ENCODE measurements at regions of chr5 and their contacts with region 1.

Region 1: GRCh38 chr5:95835682-95836385 is 13.3 kb upstream of the GLRX start:
- DNase-seq: peak; percentile 35
- ATAC-seq: no peak
- H3K4me3 ChIP-seq: peak overlapping the region; percentile 30 to 82 (median 67)
- H3K4me3 Mint-ChIP-seq: peak overlapping the region; percentile 75
- H3K27ac ChIP-seq: peak overlapping the region; percentile 60 to 86
- H3K27ac Mint-ChIP-seq: peak overlapping the region; percentile 91
- H3K4me1 ChIP-seq: peaks cover 24 to 26% of the 10 kb centered on the region in 2 donors
- H3K4me1 Mint-ChIP-seq: peaks cover 51% of the 10 kb centered on the region
- H3K27me3 ChIP-seq: no peaks in the 10 kb centered on the region
- H3K27me3 Mint-ChIP-seq: no peaks in the 10 kb centered on the region
- CTCF ChIP-seq: no peak

Region 2: DNA sequence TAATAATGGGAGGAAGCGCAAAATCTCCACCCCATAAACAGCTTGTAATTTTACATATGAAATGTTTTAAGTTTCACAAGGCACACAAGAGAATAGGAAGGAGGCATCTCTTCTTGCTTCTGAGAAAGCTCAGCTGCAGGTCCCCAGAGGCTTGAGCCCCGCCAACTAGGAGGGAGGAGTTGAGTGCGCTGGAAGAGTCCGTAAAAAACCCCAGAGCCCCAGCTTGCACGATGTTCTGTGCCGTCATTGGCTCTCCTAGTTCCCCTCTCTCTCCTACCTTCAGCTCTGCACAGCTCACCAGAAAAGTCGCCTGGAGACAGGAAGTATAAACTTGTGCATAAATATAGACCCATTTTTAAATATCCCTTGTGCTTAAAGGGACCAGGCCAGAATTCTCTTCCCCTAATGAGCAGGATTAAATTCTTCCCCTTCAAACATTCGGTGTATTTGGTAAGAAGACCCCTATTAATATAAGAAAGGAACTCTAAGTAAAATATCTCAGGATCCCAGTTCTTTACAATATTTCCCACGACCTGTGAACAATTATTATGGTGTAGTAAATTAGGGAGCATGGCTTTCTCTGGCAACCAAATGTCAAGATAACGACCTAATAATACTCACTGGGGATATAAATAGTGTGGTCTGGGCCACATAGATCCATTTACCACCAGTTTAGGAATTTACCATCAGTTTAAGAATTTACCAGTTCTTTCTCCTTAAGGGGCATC is 27.0 kb before region 1 on chr5:
- CTCF ChIA-PET with region 1: interaction called, 17 read pairs
- POLR2A ChIA-PET with region 1: interaction called, 11 read pairs
- intact Hi-C with region 1: loop called (anchors 1 kb)
- DNase-seq: peak; percentile 95
- ATAC-seq: peak; percentile 100
- H3K4me3 ChIP-seq: peak overlapping the region in 3 of 5 experiments; percentile 27 to 39 (median 33)
- H3K4me3 Mint-ChIP-seq: peak overlapping the region; percentile 86
- H3K27ac ChIP-seq: peak overlapping the region; percentile 81 to 97
- H3K27ac Mint-ChIP-seq: peak overlapping the region; percentile 97
- H3K4me1 ChIP-seq: peaks cover 34 to 37% of the 10 kb centered on the region in 2 donors
- H3K4me1 Mint-ChIP-seq: peaks cover 58% of the 10 kb centered on the region
- H3K27me3 ChIP-seq: no peaks in the 10 kb centered on the region
- H3K27me3 Mint-ChIP-seq: no peaks in the 10 kb centered on the region
- CTCF ChIP-seq: no peak

Region 3: GRCh38 chr5:95817440-95817839 is 18.4 kb before region 1 on chr5:
- CTCF ChIA-PET with region 1: interaction called, 181 read pairs
- POLR2A ChIA-PET with region 1: interaction called, 11 read pairs
- intact Hi-C with region 1: loop called (anchors 1 kb)
- DNase-seq: no peak
- ATAC-seq: no peak
- H3K4me3 ChIP-seq: peak overlapping the region in 3 of 5 experiments; percentile 51 to 70 (median 64)
- H3K4me3 Mint-ChIP-seq: peak overlapping the region; percentile 86
- H3K27ac ChIP-seq: peak overlapping the region; percentile 64 to 90
- H3K27ac Mint-ChIP-seq: peak overlapping the region; percentile 94
- H3K4me1 ChIP-seq: peaks cover 47 to 50% of the 10 kb centered on the region in 2 donors
- H3K4me1 Mint-ChIP-seq: peaks cover 80% of the 10 kb centered on the region
- H3K27me3 ChIP-seq: no peaks in the 10 kb centered on the region
- H3K27me3 Mint-ChIP-seq: no peaks in the 10 kb centered on the region
- CTCF ChIP-seq: no peak

Region 4: GRCh38 chr5:95822542-95823181 is 13.2 kb before region 1 on chr5 and contains the start of gene GLRX:
- CTCF ChIA-PET with region 1: interaction called, 181 read pairs
- POLR2A ChIA-PET with region 1: interaction called, 12 read pairs
- intact Hi-C with region 1: loop called (anchors 1 kb)
- DNase-seq: peak; percentile 63
- ATAC-seq: peak; percentile 41
- H3K4me3 ChIP-seq: peak within 1 kb of the TSS; percentile 70 to 100 (median 97)
- H3K4me3 Mint-ChIP-seq: peak within 1 kb of the TSS; percentile 99
- H3K27ac ChIP-seq: peak within 1 kb of the TSS; percentile 67 to 90
- H3K27ac Mint-ChIP-seq: peak within 1 kb of the TSS; percentile 99
- H3K4me1 ChIP-seq: peaks cover 52 to 59% of the 10 kb centered on the region in 2 donors
- H3K4me1 Mint-ChIP-seq: peaks cover 70% of the 10 kb centered on the region
- H3K27me3 ChIP-seq: no peaks in the 10 kb centered on the region
- H3K27me3 Mint-ChIP-seq: no peaks in the 10 kb centered on the region
- CTCF ChIP-seq: no peak
- total RNA-seq, gene GLRX: 44.6 and 50.0 TPM in 2 replicates